A549 (cell line): ENCODE measurements at regions of chr11 and their contacts with region 1.

Region 1: DNA sequence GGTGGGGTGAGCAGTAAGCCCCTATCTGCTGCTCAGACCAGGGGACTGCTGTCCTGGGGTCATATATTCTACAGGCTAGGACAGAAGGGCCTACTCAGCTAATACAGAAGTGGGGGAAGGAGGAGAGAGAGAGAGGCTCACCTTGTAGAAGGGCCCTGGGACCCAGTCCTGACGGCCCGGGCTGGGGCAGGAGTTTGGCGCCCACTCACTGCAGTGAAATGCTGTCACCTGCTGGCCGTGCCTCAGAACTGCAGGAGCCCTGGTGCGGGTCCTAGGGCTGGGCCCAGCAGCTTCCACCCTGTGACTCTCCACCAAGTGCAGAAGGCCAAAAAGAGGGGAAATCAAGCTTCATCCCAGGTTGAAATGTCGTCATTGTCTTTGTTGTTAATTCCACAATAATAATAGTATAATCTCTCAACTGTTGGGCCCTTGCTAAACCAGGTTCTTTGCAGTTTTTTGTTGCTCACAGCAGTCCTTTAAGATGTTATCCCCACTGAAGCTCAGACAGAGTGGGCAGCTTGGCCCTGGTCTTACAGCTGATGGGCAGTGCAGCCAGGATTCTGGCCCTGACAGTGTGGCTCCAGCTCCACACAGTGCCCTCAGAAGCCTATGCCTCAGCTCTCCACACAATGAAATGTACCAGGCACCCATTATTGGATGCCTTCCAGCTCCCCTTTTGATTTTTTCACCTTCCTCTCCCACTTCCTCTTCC is 29.6 kb downstream of the TRIM29 start:
- DNase-seq: peak; percentile 24 to 84
- ATAC-seq: peak; percentile 85 to 94
- H3K4me3 ChIP-seq: no peak overlapping the region
- H3K27ac ChIP-seq: no peak overlapping the region
- H3K4me1 ChIP-seq: no peaks in the 10 kb centered on the region
- CTCF ChIP-seq: peak; percentile 81
- EP300 ChIP-seq: no peak
- POLR2A ChIP-seq: no peak
- RAD21 ChIP-seq: peak; percentile 90

Region 2: GRCh38 chr11:119481021-119481666 is 627.2 kb before region 1 on chr11:
- CTCF ChIA-PET with region 1: interaction called, 15 read pairs
- POLR2A ChIA-PET with region 1: no interaction called
- DNase-seq: peak; percentile 84 to 86
- ATAC-seq: peak; percentile 88 to 90
- H3K4me3 ChIP-seq: no peak overlapping the region
- H3K27ac ChIP-seq: peak overlapping the region in 1 of 2 experiments; percentile 44; a peak in 2 of 6 replicates
- H3K4me1 ChIP-seq: peaks cover 8% of the 10 kb centered on the region
- CTCF ChIP-seq: peak; percentile 85
- EP300 ChIP-seq: no peak
- POLR2A ChIP-seq: no peak
- RAD21 ChIP-seq: peak; percentile 87 to 90

Region 3: DNA sequence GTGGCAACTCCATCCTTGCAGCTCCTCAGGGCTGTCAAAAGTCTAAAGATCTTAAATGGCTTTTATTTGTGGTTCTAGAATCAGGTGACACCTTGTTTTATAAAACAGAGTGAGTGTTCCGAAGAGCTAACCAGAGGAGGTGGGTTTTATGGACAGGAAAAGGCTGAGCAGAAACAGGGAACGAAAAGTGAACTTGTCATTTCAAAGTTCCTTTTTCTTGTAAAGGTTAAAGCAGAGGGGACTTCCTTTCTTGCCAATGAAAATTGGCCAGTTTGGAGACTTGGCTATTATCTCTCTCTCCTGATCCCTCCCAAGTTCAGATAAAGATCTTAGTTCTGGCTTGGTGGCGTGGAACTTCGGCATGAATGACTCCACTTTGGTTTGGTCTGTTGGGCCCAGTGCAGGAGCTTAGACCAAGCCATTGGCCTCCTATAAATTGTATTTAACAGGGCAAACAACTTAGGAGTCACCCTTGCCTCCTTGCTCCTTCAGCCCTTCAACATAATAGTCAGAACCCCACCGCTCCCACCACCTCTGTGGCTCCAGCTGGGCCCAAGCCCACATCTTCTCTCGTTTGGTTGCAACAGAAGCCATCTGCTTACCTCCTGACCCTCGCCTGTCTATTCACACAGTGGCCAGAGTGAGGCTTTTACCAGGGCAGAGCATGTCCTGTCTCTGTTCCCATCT is 583.0 kb before region 1 on chr11:
- CTCF ChIA-PET with region 1: no interaction called
- POLR2A ChIA-PET with region 1: no interaction called
- DNase-seq: no peak
- ATAC-seq: no peak
- H3K4me3 ChIP-seq: no peak overlapping the region
- H3K27ac ChIP-seq: no peak overlapping the region
- H3K4me1 ChIP-seq: no peaks in the 10 kb centered on the region
- CTCF ChIP-seq: no peak
- EP300 ChIP-seq: no peak
- POLR2A ChIP-seq: no peak
- RAD21 ChIP-seq: no peak

Region 4: DNA sequence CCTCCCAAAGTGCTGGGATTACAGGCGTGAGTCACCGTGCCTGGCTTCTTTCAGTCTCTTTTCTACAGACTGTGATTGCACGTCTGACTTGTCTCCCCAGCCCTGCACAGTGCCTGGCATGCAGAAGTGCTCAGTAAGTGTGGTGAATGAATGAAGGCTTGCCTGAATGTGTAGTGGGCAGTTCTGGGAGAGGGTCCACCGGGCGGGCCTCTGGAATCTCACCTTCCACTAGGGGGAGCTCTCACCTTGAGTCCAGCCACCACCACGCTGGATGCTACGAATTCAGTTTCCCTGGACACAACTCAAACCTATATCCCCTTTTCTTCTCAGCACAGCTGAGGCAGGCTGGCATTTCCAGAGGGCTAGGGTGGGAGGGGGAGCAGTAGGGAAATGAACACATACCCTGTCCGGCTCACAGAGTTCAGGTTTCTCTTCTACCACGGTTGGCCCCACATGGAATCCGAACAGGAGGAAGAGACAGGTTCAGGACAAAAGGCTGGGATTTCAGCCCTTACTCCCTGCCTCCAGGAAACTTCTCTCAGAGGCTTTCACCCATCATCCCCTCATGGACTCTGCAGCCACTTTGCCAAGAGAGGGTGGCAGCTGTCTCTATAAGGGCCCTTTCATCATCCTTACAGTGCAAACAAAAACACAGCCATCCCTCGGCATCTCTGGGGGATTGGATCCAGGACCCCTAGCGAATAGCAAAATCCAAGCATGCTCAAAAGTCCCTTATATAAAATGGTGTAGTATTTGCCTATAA is 466.1 kb before region 1 on chr11:
- CTCF ChIA-PET with region 1: interaction called, 10 read pairs
- POLR2A ChIA-PET with region 1: no interaction called
- DNase-seq: peak; percentile 30 to 38
- ATAC-seq: peak; percentile 57 to 85; a peak in 4 of 6 replicates
- H3K4me3 ChIP-seq: no peak overlapping the region
- H3K27ac ChIP-seq: no peak overlapping the region
- H3K4me1 ChIP-seq: no peaks in the 10 kb centered on the region
- CTCF ChIP-seq: peak; percentile 47
- EP300 ChIP-seq: no peak
- POLR2A ChIP-seq: no peak
- RAD21 ChIP-seq: peak; percentile 35 to 36; a peak in 3 of 5 replicates

Region 5: DNA sequence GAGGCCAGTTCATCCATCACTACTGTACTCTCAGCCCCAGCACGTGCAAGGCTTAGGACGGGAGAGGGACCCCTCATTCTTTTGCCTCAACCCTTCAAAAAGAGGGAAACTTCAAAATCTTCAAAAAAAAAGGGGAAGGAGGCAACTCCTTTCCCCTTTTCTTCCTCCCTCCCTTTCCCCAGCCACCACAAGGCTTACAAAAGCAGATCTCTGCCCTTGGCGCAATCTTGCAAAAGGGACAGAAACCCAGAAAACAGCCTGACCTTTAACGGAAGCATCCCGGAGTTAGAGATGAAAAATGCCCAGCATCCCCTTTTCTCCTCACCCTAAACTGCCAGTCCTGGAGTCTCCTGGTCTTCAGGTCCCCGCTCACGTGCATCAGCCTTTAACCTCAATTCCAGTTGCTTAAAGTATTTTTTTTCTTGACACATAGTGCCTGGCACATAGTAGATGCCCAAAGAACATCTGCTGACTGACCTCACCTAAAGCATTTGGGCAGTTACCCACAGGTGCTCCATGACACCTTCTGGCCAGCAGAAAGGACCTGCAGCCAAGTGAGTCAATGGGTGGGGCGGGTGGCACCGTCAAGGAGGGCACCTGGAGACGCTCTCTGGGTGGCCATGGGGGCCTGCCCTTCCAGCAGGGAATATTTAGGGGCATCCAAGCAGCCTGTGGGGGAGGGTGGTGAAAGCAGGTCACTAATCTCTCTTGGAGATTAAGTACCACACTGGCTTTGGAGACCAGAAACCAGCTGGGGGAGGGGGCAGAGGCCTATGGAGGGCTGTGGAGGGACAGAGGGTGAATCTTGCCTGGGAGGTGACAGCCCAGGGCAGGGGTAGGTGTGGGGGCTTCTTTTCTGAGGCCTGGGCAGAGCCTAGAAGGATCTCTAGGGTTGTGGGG is 395.6 kb before region 1 on chr11:
- CTCF ChIA-PET with region 1: interaction called, 15 read pairs
- POLR2A ChIA-PET with region 1: no interaction called
- DNase-seq: no peak
- ATAC-seq: no peak
- H3K4me3 ChIP-seq: no peak overlapping the region
- H3K27ac ChIP-seq: peak overlapping the region in 1 of 2 experiments; percentile 72; a peak in 3 of 6 replicates
- H3K4me1 ChIP-seq: peaks cover 18% of the 10 kb centered on the region
- CTCF ChIP-seq: no peak
- EP300 ChIP-seq: no peak
- POLR2A ChIP-seq: no peak
- RAD21 ChIP-seq: no peak

Region 6: DNA sequence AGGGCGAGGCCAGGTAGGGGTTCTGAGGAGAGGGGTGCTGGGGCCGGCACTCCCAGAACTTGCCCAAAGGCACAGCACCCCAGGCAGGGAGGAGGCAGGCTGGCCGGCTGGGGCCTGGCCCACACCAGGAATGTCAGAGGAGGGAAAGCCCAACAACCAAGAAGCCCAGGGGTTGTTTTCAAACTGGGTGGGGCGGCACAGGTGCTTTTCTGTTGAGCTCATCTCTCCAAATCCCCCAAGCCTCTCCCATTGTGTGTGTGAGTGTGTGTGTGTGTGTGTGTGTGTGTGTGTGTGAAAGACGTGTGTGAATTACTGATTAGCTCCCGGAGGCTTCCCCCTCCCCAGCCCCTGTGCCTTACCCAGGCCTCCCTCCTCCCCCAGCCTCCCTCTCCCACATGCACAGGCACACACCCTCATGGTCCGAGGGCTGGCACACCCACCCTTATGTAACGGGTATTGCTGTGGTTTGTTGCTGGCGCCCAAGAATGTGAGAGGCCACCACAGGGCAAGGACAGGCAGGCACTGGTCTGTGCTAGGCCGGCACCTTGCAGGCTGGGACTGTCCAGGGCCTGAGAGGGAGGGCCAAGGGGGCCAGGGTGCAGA is 13.7 kb after region 1 on chr11:
- CTCF ChIA-PET with region 1: interaction called, 34 read pairs
- POLR2A ChIA-PET with region 1: no interaction called
- DNase-seq: no peak
- ATAC-seq: no peak
- H3K4me3 ChIP-seq: no peak overlapping the region
- H3K27ac ChIP-seq: peak overlapping the region; percentile 10 to 34; a peak in 1 of 6 replicates
- H3K4me1 ChIP-seq: peaks cover 37% of the 10 kb centered on the region
- CTCF ChIP-seq: no peak
- EP300 ChIP-seq: no peak
- POLR2A ChIP-seq: no peak
- RAD21 ChIP-seq: no peak